MCF 10A (cell line): ENCODE measurements at regions of chr7 and their contacts with region 1.

Region 1: GRCh38 chr7:42597296-42597695 is 314.6 kb downstream of the C7orf25 start:
- DNase-seq: peak; percentile 56
- H3K4me3 Mint-ChIP-seq: no peak overlapping the region
- H3K27ac Mint-ChIP-seq: peak overlapping the region; percentile 85
- H3K4me1 Mint-ChIP-seq: peaks cover 15% of the 10 kb centered on the region
- H3K27me3 Mint-ChIP-seq: no peaks in the 10 kb centered on the region
- CTCF ChIP-seq: no peak

Region 2: GRCh38 chr7:42671627-42672026 is 74.3 kb after region 1 on chr7:
- CTCF ChIA-PET with region 1: no interaction called
- POLR2A ChIA-PET with region 1: interaction called, 14 read pairs
- intact Hi-C with region 1: no loop called
- DNase-seq: peak; percentile 95
- H3K4me3 Mint-ChIP-seq: no peak overlapping the region
- H3K27ac Mint-ChIP-seq: peak overlapping the region; percentile 89
- H3K4me1 Mint-ChIP-seq: peaks cover 42% of the 10 kb centered on the region
- H3K27me3 Mint-ChIP-seq: no peaks in the 10 kb centered on the region
- CTCF ChIP-seq: no peak

Region 3: GRCh38 chr7:42677751-42678699 is 80.7 kb after region 1 on chr7:
- CTCF ChIA-PET with region 1: no interaction called
- POLR2A ChIA-PET with region 1: interaction called, 19 read pairs
- intact Hi-C with region 1: no loop called
- DNase-seq: peak; percentile 91
- H3K4me3 Mint-ChIP-seq: peak overlapping the region; percentile 17
- H3K27ac Mint-ChIP-seq: peak overlapping the region; percentile 86
- H3K4me1 Mint-ChIP-seq: peaks cover 36% of the 10 kb centered on the region
- H3K27me3 Mint-ChIP-seq: no peaks in the 10 kb centered on the region
- CTCF ChIP-seq: no peak